PC-3 (cell line): ENCODE measurements at regions of chr7 and their contacts with region 1.

Region 1: GRCh38 chr7:151936207-151936606 is 20.0 kb upstream of the GALNTL5 start:
- DNase-seq: no peak
- ATAC-seq: no peak
- H3K4me3 ChIP-seq: no peak overlapping the region
- H3K27ac ChIP-seq: no peak overlapping the region
- H3K4me1 ChIP-seq: peaks cover 19% of the 10 kb centered on the region
- H3K27me3 ChIP-seq: no peaks in the 10 kb centered on the region
- CTCF ChIP-seq: no peak

Region 2: GRCh38 chr7:151782598-151783448 is 153.4 kb before region 1 on chr7:
- CTCF ChIA-PET with region 1: interaction called, 6 read pairs
- POLR2A ChIA-PET with region 1: no interaction called
- intact Hi-C with region 1: loop called (anchors 1 kb)
- DNase-seq: peak; percentile 60
- ATAC-seq: peak; percentile 96
- H3K4me3 ChIP-seq: peak overlapping the region; percentile 49
- H3K27ac ChIP-seq: no peak overlapping the region
- H3K4me1 ChIP-seq: no peaks in the 10 kb centered on the region
- H3K27me3 ChIP-seq: no peaks in the 10 kb centered on the region
- CTCF ChIP-seq: peak; percentile 94

Region 3: GRCh38 chr7:151837285-151838096 is 98.7 kb before region 1 on chr7:
- CTCF ChIA-PET with region 1: no interaction called
- POLR2A ChIA-PET with region 1: no interaction called
- intact Hi-C with region 1: no loop called
- DNase-seq: no peak
- ATAC-seq: no peak
- H3K4me3 ChIP-seq: no peak overlapping the region
- H3K27ac ChIP-seq: no peak overlapping the region
- H3K4me1 ChIP-seq: no peaks in the 10 kb centered on the region
- H3K27me3 ChIP-seq: no peaks in the 10 kb centered on the region
- CTCF ChIP-seq: no peak

Region 4: DNA sequence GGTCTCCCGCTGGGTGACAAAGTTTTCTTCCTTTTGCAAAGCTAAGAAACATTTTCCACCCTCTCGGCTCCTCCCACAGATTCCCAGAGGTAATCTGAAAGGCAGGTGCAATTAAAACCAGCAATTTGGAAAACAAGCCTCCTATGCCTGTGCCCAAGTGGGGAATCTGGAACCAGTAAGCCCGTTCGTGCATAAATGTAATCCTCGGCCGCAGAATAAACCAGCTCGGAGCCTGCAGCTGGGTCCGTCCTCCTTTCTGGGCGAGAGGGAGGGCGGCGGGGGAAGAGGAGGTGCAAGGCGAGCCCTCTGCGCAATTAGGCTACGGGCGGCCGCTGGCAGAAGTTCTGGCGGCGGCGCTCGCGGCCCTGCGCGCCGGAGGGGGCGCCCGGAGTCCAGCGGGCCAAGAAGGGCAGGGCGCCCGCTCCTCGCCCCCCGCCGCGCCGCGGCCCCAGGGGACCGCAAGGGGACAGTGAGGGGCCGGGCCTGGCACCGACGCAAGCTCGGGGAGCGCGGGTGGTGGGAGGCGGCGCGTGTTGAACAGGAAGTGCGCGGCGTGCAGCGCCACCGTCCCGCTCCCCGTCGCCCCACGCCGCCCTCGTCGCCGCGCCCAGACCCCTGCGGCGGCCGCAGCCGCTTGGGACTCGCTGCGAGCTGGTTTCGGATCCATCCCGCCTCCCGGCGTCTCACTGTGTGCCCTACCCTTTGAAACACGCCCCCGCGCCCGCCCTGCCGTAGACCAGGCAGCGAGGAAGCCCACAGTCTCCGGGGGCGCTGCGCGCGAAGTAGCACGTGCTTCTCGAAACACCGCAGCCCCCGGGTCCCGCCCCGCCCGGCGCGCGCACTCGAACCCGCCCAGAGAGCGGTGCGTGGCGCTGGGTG is 59.1 kb before region 1 on chr7 and contains the start of gene PRKAG2:
- CTCF ChIA-PET with region 1: no interaction called
- POLR2A ChIA-PET with region 1: no interaction called
- intact Hi-C with region 1: loop called (anchors 2 kb)
- DNase-seq: peak; percentile 35
- ATAC-seq: peak; percentile 46
- H3K4me3 ChIP-seq: peak within 1 kb of the TSS; percentile 83
- H3K27ac ChIP-seq: no peak within 1 kb of the TSS
- H3K4me1 ChIP-seq: peaks cover 15% of the 10 kb centered on the region
- H3K27me3 ChIP-seq: peaks cover 19% of the 10 kb centered on the region
- CTCF ChIP-seq: no peak
- total RNA-seq, gene PRKAG2: 21.5 and 23.9 TPM in 2 replicates

Region 5: GRCh38 chr7:151888079-151889067 is 47.8 kb before region 1 on chr7:
- CTCF ChIA-PET with region 1: no interaction called
- POLR2A ChIA-PET with region 1: no interaction called
- intact Hi-C with region 1: loop called (anchors 1 kb)
- DNase-seq: peak; percentile 23
- ATAC-seq: peak; percentile 69
- H3K4me3 ChIP-seq: no peak overlapping the region
- H3K27ac ChIP-seq: no peak overlapping the region
- H3K4me1 ChIP-seq: no peaks in the 10 kb centered on the region
- H3K27me3 ChIP-seq: peaks cover 55% of the 10 kb centered on the region
- CTCF ChIP-seq: peak; percentile 37; the same call in 1 of the 2 replicates

Region 6: GRCh38 chr7:151992375-151992774 is 56.2 kb after region 1 on chr7:
- CTCF ChIA-PET with region 1: interaction called, 3 read pairs
- POLR2A ChIA-PET with region 1: no interaction called
- intact Hi-C with region 1: loop called (anchors 5 kb)
- DNase-seq: peak; percentile 68
- ATAC-seq: peak; percentile 99
- H3K4me3 ChIP-seq: peak overlapping the region; percentile 20; the same call in 1 of the 2 replicates
- H3K27ac ChIP-seq: no peak overlapping the region
- H3K4me1 ChIP-seq: no peaks in the 10 kb centered on the region
- H3K27me3 ChIP-seq: no peaks in the 10 kb centered on the region
- CTCF ChIP-seq: peak; percentile 53

Region 7: GRCh38 chr7:152145853-152146466 is 209.8 kb after region 1 on chr7:
- CTCF ChIA-PET with region 1: no interaction called
- POLR2A ChIA-PET with region 1: no interaction called
- intact Hi-C with region 1: loop called (anchors 2 kb)
- DNase-seq: peak; percentile 56
- ATAC-seq: peak; percentile 96
- H3K4me3 ChIP-seq: no peak overlapping the region
- H3K27ac ChIP-seq: no peak overlapping the region
- H3K4me1 ChIP-seq: no peaks in the 10 kb centered on the region
- H3K27me3 ChIP-seq: no peaks in the 10 kb centered on the region
- CTCF ChIP-seq: peak; percentile 78